Ovary (tissue), 10 donors: ENCODE measurements at regions of chrX and their contacts with region 1.

Region 1: DNA sequence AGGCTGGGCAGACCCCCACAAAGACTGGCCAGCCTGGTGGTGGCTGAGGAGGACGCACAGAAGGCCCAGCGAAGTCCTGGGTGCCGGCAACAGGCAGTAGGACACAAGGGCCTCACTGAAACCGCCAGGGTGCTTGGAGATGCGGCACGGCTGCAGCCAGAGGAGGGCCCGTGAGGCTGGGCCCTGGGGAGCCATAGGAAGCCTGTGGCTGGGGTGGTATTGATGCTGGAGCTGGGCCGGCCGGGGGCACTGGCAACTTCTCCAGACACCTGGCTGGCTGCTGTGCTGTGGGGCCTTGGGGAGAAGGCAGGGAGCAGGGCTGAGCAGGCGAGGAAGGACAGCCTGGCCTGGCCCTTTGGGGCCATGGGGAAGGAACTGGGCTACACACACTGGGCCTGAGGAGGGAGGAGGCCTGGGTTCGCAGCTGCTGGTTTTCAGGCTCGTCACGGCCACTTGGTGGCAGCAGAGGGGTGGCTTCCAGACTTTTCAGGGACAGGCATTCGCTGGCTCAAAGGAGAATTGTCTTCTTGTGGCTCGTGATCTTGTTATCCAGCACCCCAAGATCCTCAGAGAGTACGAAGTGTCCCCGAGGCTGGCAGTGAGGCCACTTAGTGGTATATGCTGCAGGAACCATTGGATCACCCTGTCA is 37.2 kb downstream of the ATP2B3 start:
- DNase-seq: peak; percentile 48 to 77 (median 60)
- H3K4me3 ChIP-seq: no peak overlapping the region
- H3K27ac ChIP-seq: no peak overlapping the region
- H3K4me1 ChIP-seq: no peaks in the 10 kb centered on the region
- H3K27me3 ChIP-seq: no peaks in the 10 kb centered on the region
- CTCF ChIP-seq: peak in 2 of 3 donors; percentile 23 to 41
- EP300 ChIP-seq: no peak
- POLR2A ChIP-seq: no peak

Region 2: GRCh38 chrX:153488231-153488914 is 66.3 kb before region 1 on chrX:
- intact Hi-C with region 1: loop called in 1 of 4 experiments (anchors 10 kb)
- DNase-seq: peak; percentile 39 to 75 (median 63)
- H3K4me3 ChIP-seq: no peak overlapping the region
- H3K27ac ChIP-seq: peak overlapping the region in 1 of 2 donors; percentile 6
- H3K4me1 ChIP-seq: peaks cover 16% of the 10 kb centered on the region
- H3K27me3 ChIP-seq: no peaks in the 10 kb centered on the region
- CTCF ChIP-seq: no peak
- EP300 ChIP-seq: no peak
- POLR2A ChIP-seq: no peak

Region 3: GRCh38 chrX:153599192-153600031 is 44.8 kb after region 1 on chrX:
- intact Hi-C with region 1: loop called in 1 of 4 experiments (anchors 10 kb)
- DNase-seq: peak; percentile 86 to 92 (median 88)
- H3K4me3 ChIP-seq: peak overlapping the region; percentile 56
- H3K27ac ChIP-seq: no peak overlapping the region
- H3K4me1 ChIP-seq: no peaks in the 10 kb centered on the region
- H3K27me3 ChIP-seq: no peaks in the 10 kb centered on the region
- CTCF ChIP-seq: peak in 1 of 3 donors; percentile 14
- EP300 ChIP-seq: no peak
- POLR2A ChIP-seq: no peak

Region 4: DNA sequence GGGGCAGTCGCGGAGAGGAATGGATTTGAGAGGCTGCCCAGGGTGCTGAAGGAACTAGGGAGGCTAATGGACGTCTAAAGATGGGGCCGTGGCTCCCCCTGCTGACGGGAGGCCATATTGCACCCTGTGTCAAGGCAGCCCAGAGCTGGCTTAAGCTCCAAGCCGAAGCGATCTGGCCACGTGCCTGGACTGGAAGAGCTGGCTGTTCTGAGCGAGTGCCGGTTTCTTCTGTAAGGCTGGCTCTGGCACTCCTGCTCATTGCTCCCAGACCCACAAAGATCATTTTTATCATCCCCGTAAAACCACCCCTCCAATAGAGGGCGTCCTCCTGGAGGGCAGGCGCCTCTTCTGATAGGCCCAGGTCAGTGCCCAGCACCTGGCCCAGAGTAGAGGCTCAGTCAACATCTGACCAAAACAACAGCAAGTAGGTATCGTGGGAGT is 113.3 kb after region 1 on chrX:
- intact Hi-C with region 1: loop called in 3 of 4 experiments (anchors 5 to 10 kb)
- DNase-seq: peak; percentile 87 to 95 (median 91)
- H3K4me3 ChIP-seq: no peak overlapping the region
- H3K27ac ChIP-seq: no peak overlapping the region
- H3K4me1 ChIP-seq: no peaks in the 10 kb centered on the region
- H3K27me3 ChIP-seq: no peaks in the 10 kb centered on the region
- CTCF ChIP-seq: peak; percentile 53 to 79 (median 67)
- EP300 ChIP-seq: no peak
- POLR2A ChIP-seq: no peak

Region 5: DNA sequence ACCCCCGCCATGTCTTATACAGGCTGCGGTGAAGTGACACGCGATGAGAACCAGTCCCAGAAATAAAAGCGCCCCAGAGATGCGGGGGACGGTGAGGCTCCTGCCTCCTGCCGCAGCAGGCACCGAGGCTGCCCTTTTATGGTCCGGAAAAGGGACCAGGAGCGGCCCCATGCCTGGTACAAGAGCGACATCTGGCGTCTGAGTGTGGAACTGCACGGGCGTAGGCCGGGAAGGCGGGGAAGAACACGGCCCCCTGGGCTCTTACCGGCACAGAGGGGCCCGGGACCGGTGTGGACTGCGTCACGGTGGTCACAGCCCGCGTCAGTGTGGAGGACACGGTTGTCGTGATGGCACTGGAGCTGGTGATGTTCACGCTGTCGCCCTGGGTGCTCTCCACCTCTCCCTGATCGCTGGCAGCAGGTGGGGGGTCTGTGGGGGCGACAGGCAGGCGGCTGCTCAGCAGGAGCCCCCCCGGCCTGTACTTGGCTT is 398.7 kb after region 1 on chrX:
- intact Hi-C with region 1: loop called in 1 of 4 experiments (anchors 10 kb)
- DNase-seq: peak; percentile 60 to 87 (median 80)
- H3K4me3 ChIP-seq: no peak overlapping the region
- H3K27ac ChIP-seq: no peak overlapping the region
- H3K4me1 ChIP-seq: peaks cover 2% of the 10 kb centered on the region
- H3K27me3 ChIP-seq: no peaks in the 10 kb centered on the region
- CTCF ChIP-seq: peak; percentile 92 to 95 (median 94)
- EP300 ChIP-seq: no peak
- POLR2A ChIP-seq: no peak